Colonic mucosa (tissue), 4 donors: ENCODE measurements at regions of chr11 and their contacts with region 1.

Region 1: DNA sequence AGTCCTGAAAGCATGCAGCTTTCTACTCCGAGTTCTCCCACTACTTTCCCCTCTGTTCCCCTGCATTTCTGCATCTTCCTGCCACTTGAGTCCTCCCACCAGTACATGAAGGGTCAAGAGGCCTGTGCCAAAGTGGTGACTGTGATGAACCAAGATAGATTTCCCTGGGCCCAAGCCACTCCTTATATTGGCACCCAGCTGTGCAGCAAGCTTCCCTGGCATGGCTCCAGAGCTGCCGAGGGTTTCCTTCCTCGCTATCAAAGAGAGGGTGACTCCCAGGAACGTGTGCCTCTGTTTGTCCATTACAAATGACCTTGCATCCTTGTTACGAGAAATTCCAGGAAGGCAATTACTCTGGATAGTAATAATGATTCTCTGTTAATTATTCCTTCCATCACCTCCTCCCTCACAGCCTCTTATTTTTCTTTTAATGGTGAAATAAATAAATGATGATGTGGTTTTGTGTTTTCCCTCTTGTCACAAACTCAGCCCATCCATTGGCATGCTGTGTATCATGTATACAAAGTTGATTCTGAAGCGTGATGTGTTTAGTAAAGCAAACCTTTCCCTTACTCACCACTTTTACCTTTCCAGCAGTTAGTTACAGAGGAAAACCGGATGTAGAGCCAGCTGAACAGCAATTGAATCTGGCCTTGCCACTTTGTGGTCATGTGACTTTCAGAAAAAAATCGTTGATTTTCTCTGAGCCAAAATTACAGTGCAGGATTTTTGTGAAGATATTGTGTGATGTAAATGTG is 8.3 kb downstream of the SRSF8 start:
- DNase-seq: peak; percentile 85
- H3K4me3 ChIP-seq: no peak overlapping the region
- H3K27ac ChIP-seq: no peak overlapping the region
- H3K4me1 ChIP-seq: peaks cover under 1% of the 10 kb centered on the region
- H3K27me3 ChIP-seq: no peaks in the 10 kb centered on the region
- CTCF ChIP-seq: no peak

Region 2: DNA sequence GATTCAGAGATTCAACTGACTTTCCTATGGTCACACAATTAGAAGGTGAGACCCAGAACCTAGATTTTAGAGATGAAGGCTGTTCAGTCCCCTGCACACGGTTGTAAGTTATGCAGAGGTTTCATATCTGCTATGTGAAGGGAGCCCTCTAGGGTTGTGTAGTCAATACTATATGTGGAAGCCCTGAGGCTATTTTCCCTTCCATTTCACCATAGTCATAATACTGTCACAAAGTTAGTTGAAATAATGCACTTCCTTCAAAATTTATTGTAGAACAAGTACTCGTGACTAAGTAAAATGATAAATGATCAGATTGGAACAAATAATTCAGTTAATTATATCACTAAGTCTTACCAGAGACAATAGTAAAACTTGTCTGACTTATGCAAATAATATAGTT is 63.5 kb after region 1 on chr11:
- intact Hi-C with region 1: loop called (anchors 5 kb)
- DNase-seq: no peak
- H3K4me3 ChIP-seq: no peak overlapping the region
- H3K27ac ChIP-seq: no peak overlapping the region
- H3K4me1 ChIP-seq: no peaks in the 10 kb centered on the region
- H3K27me3 ChIP-seq: no peaks in the 10 kb centered on the region
- CTCF ChIP-seq: peak; percentile 11

Region 3: GRCh38 chr11:95222817-95223216 is 147.8 kb after region 1 on chr11:
- intact Hi-C with region 1: no loop called
- DNase-seq: no peak
- H3K4me3 ChIP-seq: no peak overlapping the region
- H3K27ac ChIP-seq: no peak overlapping the region
- H3K4me1 ChIP-seq: no peaks in the 10 kb centered on the region
- H3K27me3 ChIP-seq: no peaks in the 10 kb centered on the region
- CTCF ChIP-seq: no peak